Lower leg skin (tissue), 4 donors: ENCODE measurements at regions of chr9 and their contacts with region 1.

Region 1: GRCh38 chr9:95783426-95783975 is 92.0 kb upstream of the ERCC6L2 start:
- DNase-seq: no peak
- H3K4me3 ChIP-seq: no peak overlapping the region
- CTCF ChIP-seq: no peak
- POLR2A ChIP-seq: no peak

Region 2: DNA sequence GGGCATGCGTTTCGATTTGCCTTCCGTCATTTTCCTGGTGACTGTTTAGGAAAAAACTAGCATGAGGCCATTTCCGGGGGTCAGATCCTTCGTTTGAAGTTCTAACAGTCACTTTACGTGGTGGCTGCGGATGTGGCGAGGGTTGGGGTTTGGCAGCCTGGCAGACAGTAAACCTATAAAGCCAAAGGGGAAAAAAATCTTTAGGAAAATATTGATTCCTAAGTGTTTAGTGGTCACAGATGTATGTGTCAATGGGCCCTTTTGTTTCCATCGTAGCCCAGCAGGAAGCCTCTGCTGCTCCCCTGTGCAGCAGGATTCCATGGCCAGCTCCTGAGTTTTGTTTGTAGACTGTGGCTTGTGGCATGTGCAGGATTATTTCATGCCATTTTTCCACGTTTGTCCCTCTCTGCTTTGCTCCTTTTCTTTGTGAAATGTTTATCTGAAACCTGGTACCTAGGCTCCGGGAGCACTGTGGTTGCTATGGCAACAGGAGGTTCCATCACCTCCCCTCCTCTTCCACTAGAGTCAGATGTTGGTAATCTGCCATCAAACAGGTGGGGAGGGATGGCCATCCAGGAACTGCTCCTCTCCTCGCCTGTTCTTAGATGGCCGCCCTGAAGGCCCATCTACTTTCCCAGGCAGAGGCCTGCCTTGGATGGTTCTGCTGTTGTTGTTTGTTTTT is 854.7 kb before region 1 on chr9:
- intact Hi-C with region 1: loop called (anchors 5 kb)
- DNase-seq: no peak
- H3K4me3 ChIP-seq: no peak overlapping the region
- CTCF ChIP-seq: no peak
- POLR2A ChIP-seq: no peak

Region 3: GRCh38 chr9:95004411-95005277 is 778.9 kb before region 1 on chr9:
- intact Hi-C with region 1: loop called (anchors 5 kb)
- DNase-seq: no peak
- H3K4me3 ChIP-seq: peak overlapping the region; percentile 72
- CTCF ChIP-seq: no peak
- POLR2A ChIP-seq: no peak